Vagina (tissue), 2 donors: ENCODE measurements at regions of chr10 and their contacts with region 1.

Region 1: GRCh38 chr10:69639291-69640195 is 9.5 kb downstream of the FAM241B start:
- DNase-seq: no peak
- H3K4me3 ChIP-seq: no peak overlapping the region
- H3K27ac ChIP-seq: no peak overlapping the region
- H3K4me1 ChIP-seq: peaks cover 9% of the 10 kb centered on the region
- H3K27me3 ChIP-seq: no peaks in the 10 kb centered on the region
- CTCF ChIP-seq: peak; percentile 58 to 86 (median 83)
- POLR2A ChIP-seq: no peak

Region 2: GRCh38 chr10:69425511-69426298 is 213.8 kb before region 1 on chr10:
- intact Hi-C with region 1: loop called (anchors 10 kb)
- DNase-seq: no peak
- H3K4me3 ChIP-seq: no peak overlapping the region
- H3K27ac ChIP-seq: no peak overlapping the region
- H3K4me1 ChIP-seq: no peaks in the 10 kb centered on the region
- H3K27me3 ChIP-seq: no peaks in the 10 kb centered on the region
- CTCF ChIP-seq: no peak
- POLR2A ChIP-seq: no peak

Region 3: GRCh38 chr10:69479240-69480067 is 160.1 kb before region 1 on chr10:
- intact Hi-C with region 1: no loop called
- DNase-seq: no peak
- H3K4me3 ChIP-seq: no peak overlapping the region
- H3K27ac ChIP-seq: peak overlapping the region; percentile 65
- H3K4me1 ChIP-seq: peaks cover 33% of the 10 kb centered on the region
- H3K27me3 ChIP-seq: no peaks in the 10 kb centered on the region
- CTCF ChIP-seq: no peak
- POLR2A ChIP-seq: no peak

Region 4: DNA sequence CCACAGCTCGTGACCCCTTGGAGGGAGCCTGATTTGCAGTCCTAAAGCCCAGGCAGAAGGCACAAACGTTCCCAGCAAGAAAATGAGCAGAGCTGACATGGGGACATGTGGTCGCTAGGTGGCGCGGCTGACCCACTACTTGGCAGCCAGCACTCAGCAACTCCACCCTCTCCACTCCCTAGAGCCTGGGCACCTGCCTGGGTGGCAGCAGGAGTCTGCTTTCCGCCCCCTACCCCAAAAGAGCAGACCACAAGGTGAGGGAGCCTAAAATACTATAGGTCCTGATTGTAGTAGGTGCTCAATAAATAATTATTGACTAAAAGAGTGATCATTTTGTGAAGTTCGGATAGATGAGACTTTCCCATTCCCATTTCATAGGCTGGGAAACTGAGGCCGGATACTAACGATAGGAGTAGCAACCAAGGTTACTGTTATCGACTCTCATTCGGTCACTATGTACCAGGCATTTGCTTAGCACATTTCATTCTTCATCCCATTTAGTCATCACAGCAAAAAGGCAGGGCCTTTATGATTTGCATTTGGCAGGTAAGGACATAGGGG is 123.8 kb before region 1 on chr10:
- intact Hi-C with region 1: loop called (anchors 10 kb)
- DNase-seq: no peak
- H3K4me3 ChIP-seq: no peak overlapping the region
- H3K27ac ChIP-seq: no peak overlapping the region
- H3K4me1 ChIP-seq: no peaks in the 10 kb centered on the region
- H3K27me3 ChIP-seq: no peaks in the 10 kb centered on the region
- CTCF ChIP-seq: peak in 2 of 3 experiments; percentile 47 to 61
- POLR2A ChIP-seq: no peak

Region 5: GRCh38 chr10:69800109-69800508 is 160.6 kb after region 1 on chr10:
- intact Hi-C with region 1: loop called (anchors 10 kb)
- DNase-seq: no peak
- H3K4me3 ChIP-seq: no peak overlapping the region
- H3K27ac ChIP-seq: no peak overlapping the region
- H3K4me1 ChIP-seq: peaks cover 24% of the 10 kb centered on the region
- H3K27me3 ChIP-seq: no peaks in the 10 kb centered on the region
- CTCF ChIP-seq: peak in 2 of 3 experiments; percentile 40 to 47
- POLR2A ChIP-seq: no peak